Naive thymus-derived CD8-positive, alpha-beta T cell (primary cell): ENCODE measurements at regions of chr6 and their contacts with region 1.

Region 1: DNA sequence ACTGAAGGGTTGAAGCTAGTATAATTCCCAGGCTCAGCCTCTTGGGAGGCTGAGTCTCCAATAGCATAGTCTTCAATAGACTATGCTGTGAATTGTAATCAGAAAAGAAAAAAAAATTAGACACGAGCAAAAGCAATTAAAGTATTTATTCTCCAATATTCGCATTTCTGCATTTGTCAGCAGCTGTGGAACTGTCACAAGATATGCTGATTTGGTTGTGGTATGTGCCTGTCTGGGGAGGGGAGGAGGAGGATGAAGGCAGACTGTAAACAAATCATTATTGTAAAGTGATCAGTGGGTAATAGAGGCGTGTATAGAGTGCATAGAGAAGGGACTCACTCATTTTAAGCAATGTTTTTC is 10.1 kb upstream of the BICRAL start:
- DNase-seq: peak in 2 of 10 donors; percentile 63 to 66
- ATAC-seq: peak; percentile 20 to 50
- H3K4me3 Mint-ChIP-seq: peak overlapping the region; percentile 65 to 91 (median 84)
- H3K27ac Mint-ChIP-seq: peak overlapping the region; percentile 98 to 100 (median 100)
- H3K4me1 Mint-ChIP-seq: peaks cover 38 to 82% (median 77%) of the 10 kb centered on the region in 4 donors
- H3K27me3 Mint-ChIP-seq: no peaks in the 10 kb centered on the region

Region 2: DNA sequence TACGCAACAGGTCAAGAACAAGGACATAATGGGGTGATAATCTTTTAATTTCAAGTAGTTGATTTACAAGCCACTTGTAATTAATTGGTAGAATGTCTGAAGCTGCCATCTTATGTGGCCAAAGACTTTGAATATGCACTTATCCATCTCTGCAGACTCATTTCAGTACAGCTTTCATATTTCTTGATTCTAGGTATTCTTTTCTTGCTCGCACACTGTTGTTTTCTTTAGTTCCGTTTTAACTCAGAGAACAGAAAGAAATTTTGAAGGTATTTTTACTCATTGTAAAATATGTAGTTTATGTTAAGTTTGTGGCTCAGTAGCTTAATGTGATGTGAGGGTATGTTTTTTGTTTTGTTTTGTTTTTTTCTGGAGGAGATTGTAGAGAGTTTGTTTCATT is 134.0 kb before region 1 on chr6:
- POLR2A ChIA-PET with region 1: no interaction called
- DNase-seq: no peak
- ATAC-seq: no peak
- H3K4me3 Mint-ChIP-seq: no peak overlapping the region
- H3K27ac Mint-ChIP-seq: no peak overlapping the region
- H3K4me1 Mint-ChIP-seq: peaks cover 0 to 2% (median under 1%) of the 10 kb centered on the region in 4 donors
- H3K27me3 Mint-ChIP-seq: no peaks in the 10 kb centered on the region

Region 3: GRCh38 chr6:42692137-42692911 is 79.4 kb before region 1 on chr6:
- POLR2A ChIA-PET with region 1: interaction called, 25 read pairs
- DNase-seq: no peak
- ATAC-seq: peak in 1 of 2 donors; percentile 11
- H3K4me3 Mint-ChIP-seq: peak overlapping the region in 3 of 10 donors; percentile 4 to 61 (median 44)
- H3K27ac Mint-ChIP-seq: peak overlapping the region; percentile 48 to 96 (median 90)
- H3K4me1 Mint-ChIP-seq: peaks cover 26 to 55% (median 47%) of the 10 kb centered on the region in 4 donors
- H3K27me3 Mint-ChIP-seq: no peaks in the 10 kb centered on the region

Region 4: DNA sequence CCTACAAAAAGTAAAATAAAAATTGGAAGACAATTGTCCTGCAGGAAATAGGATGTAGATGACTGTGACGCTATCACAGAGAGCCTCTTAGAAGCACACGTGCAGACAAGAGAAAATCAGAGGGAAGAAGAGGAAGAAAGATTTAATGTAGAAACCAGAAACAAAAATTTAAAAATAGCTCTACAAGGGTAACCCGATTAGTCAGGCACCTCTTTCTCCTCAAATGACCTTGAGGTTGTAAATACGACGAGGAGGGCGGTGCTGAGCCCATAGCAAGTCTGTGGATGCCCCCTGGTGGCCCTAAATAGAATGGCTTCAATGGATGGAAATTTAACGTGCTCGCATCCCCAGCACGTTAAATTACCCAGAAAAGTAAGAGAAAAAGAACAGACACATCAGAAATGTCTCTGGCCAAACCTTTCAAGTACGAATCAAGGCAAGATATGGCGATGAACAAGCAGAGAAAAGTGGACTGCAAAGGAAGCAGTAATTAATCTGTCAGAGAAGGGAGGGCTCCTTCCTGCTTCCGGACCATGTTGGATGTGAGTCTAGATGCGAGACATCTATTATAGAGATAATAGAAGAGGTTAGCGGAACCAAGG is 45.1 kb before region 1 on chr6:
- POLR2A ChIA-PET with region 1: interaction called, 55 read pairs
- DNase-seq: peak; percentile 43 to 91 (median 77)
- ATAC-seq: peak; percentile 93 to 98
- H3K4me3 Mint-ChIP-seq: peak overlapping the region; percentile 75 to 98 (median 90)
- H3K27ac Mint-ChIP-seq: peak overlapping the region; percentile 93 to 99 (median 98)
- H3K4me1 Mint-ChIP-seq: peaks cover 11 to 25% (median 19%) of the 10 kb centered on the region in 4 donors
- H3K27me3 Mint-ChIP-seq: no peaks in the 10 kb centered on the region

Region 5: GRCh38 chr6:42758756-42759430 is 12.8 kb before region 1 on chr6:
- POLR2A ChIA-PET with region 1: interaction called, 803 read pairs
- DNase-seq: no peak
- ATAC-seq: no peak
- H3K4me3 Mint-ChIP-seq: no peak overlapping the region
- H3K27ac Mint-ChIP-seq: peak overlapping the region in 3 of 10 donors; percentile 52 to 89 (median 64)
- H3K4me1 Mint-ChIP-seq: peaks cover 20 to 50% (median 33%) of the 10 kb centered on the region in 4 donors
- H3K27me3 Mint-ChIP-seq: no peaks in the 10 kb centered on the region

Region 6: GRCh38 chr6:42790549-42791181 is 18.9 kb after region 1 on chr6:
- POLR2A ChIA-PET with region 1: interaction called, 624 read pairs
- DNase-seq: peak in 1 of 10 donors; percentile 7
- ATAC-seq: peak; percentile 17 to 18
- H3K4me3 Mint-ChIP-seq: peak overlapping the region in 8 of 10 donors; percentile 11 to 61 (median 48)
- H3K27ac Mint-ChIP-seq: peak overlapping the region in 8 of 10 donors; percentile 76 to 97 (median 86)
- H3K4me1 Mint-ChIP-seq: peaks cover 20 to 41% (median 30%) of the 10 kb centered on the region in 4 donors
- H3K27me3 Mint-ChIP-seq: no peaks in the 10 kb centered on the region

Region 7: GRCh38 chr6:42879372-42880239 is 107.9 kb after region 1 on chr6 and contains the start of gene RPL7L1:
- POLR2A ChIA-PET with region 1: interaction called, 61 read pairs
- DNase-seq: peak; percentile 67 to 93 (median 83)
- ATAC-seq: peak; percentile 92 to 93
- H3K4me3 Mint-ChIP-seq: peak within 1 kb of the TSS; percentile 92 to 100 (median 97)
- H3K27ac Mint-ChIP-seq: peak within 1 kb of the TSS; percentile 98 to 100 (median 100)
- H3K4me1 Mint-ChIP-seq: peaks cover 9 to 37% (median 35%) of the 10 kb centered on the region in 4 donors
- H3K27me3 Mint-ChIP-seq: no peaks in the 10 kb centered on the region
- polyA plus RNA-seq, gene RPL7L1: 65.3 to 87.9 (median 67.4) TPM

Region 8: GRCh38 chr6:42890311-42891198 is 118.8 kb after region 1 on chr6:
- POLR2A ChIA-PET with region 1: interaction called, 19 read pairs
- DNase-seq: peak; percentile 69 to 94 (median 85)
- ATAC-seq: peak; percentile 87 to 94
- H3K4me3 Mint-ChIP-seq: peak overlapping the region; percentile 92 to 99 (median 98)
- H3K27ac Mint-ChIP-seq: peak overlapping the region; percentile 92 to 98 (median 96)
- H3K4me1 Mint-ChIP-seq: peaks cover 7 to 37% (median 19%) of the 10 kb centered on the region in 4 donors
- H3K27me3 Mint-ChIP-seq: no peaks in the 10 kb centered on the region

Region 9: DNA sequence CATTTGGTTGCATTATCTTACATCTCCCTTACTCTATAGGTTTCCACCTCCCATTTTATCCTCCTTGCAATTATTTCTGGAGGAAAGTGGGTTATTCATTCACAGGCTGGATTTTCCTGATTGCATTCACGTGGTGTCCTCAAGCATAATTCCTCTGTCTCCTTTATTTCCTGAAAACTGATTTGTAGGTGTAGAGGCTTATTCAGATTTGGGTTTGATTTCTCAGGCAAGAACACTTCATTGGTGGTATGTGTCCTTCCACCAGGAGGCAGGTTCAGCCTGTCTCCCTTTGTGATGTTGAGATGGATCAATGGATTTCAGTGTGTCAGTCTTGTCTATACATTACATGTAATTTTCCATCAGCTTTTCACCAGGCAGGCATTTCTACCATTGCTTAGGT is 440.2 kb after region 1 on chr6:
- POLR2A ChIA-PET with region 1: no interaction called
- DNase-seq: no peak
- ATAC-seq: no peak
- H3K4me3 Mint-ChIP-seq: no peak overlapping the region
- H3K27ac Mint-ChIP-seq: peak overlapping the region in 2 of 10 donors; percentile 15 to 46
- H3K4me1 Mint-ChIP-seq: peaks cover 0 to 5% (median 0%) of the 10 kb centered on the region in 4 donors
- H3K27me3 Mint-ChIP-seq: no peaks in the 10 kb centered on the region